Activated CD4-positive, alpha-beta T cell treated with anti-CD3 and anti-CD28 coated beads for 36 hours (primary cell): ENCODE measurements at regions of chr19 and their contacts with region 1.

Region 1: DNA sequence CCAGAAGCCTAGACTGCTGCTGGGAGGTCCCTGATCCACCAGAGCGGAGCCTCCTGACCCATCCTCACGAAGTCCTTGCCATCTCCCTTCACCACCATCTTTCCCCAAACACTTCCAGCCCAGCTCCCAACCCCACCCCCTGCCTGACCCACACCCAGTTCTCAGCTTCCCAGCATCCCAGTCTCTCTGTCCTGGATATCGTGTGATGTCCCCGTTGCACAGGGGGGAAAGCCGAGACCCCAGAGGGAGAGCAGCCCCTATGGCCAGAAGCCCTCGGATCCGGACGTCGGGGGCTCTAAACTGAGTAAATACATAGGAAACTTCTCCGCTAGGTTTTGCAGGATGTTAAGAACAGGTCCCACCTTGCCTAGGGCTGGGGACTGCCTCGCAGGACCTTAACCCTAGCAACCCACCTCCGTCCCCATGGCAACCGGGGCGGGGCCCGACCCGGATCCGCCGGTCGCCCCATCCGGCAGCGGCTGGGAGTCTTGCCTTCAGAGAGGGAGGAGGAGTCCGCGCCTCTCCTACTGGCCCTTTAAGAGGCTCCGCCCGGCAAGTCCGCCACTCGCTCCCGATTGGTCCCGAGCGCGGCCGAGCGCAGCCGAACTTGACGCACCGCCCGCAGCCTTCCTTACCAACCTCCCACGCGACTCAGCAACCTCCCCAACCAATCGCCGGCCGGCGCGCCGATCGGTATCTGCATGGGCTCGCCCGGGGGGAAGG is 451 bp upstream of the HMG20B start:
- DNase-seq: peak; percentile 100
- ATAC-seq: peak; percentile 96
- H3K4me3 Mint-ChIP-seq: peak overlapping the region; percentile 73
- H3K27ac Mint-ChIP-seq: no peak overlapping the region
- H3K4me1 Mint-ChIP-seq: peaks cover 11% of the 10 kb centered on the region
- H3K27me3 Mint-ChIP-seq: no peaks in the 10 kb centered on the region

Region 2: DNA sequence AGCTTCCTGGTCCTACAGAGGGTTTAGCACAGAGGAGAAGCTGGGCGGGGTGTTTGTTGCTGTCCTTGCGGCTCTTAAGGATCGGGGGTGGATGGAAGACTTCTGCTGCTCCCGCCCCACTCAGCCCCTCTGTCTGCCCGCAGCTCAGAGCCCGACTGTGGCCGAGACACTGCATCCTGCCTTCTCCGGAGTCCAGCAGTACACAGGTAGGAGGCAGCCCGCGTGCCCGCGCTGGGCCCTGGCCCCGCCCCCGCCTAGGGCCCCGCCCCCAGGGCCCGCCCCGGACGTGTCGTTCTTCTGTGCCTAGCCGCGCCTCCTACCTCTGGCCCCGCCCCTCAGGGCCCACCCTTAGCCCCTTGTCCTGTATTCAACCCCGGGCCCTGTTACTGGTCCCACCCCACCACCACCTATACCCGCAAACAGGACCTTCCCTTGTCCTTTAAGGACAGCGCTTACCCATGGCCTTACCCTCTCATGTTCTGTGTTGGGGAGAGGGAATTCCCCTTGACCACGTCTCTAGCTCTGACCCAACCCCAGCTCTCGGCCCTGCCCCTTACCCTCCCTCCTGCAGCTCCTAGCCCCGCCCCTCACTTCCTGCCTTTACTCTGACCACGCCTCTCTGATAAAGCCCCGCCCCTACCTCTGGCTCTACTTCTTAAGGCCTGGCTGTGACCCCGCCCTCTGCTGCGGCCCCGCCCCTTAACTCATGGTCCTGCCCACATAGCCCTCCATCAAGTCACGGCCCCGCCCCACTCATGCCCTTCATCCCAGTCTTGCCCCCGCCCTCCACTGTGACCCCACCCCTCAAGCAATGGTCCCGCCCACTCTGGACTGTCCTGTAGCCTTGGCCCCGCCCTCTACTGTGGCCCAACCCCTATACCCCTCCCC is 287.3 kb before region 1 on chr19:
- CTCF ChIA-PET with region 1: no interaction called
- POLR2A ChIA-PET with region 1: no interaction called
- intact Hi-C with region 1: loop called in 1 of 2 experiments (anchors 1 kb)
- DNase-seq: peak; percentile 94
- ATAC-seq: peak; percentile 91
- H3K4me3 Mint-ChIP-seq: peak overlapping the region; percentile 51
- H3K27ac Mint-ChIP-seq: no peak overlapping the region
- H3K4me1 Mint-ChIP-seq: peaks cover 12% of the 10 kb centered on the region
- H3K27me3 Mint-ChIP-seq: peaks cover 19% of the 10 kb centered on the region

Region 3: DNA sequence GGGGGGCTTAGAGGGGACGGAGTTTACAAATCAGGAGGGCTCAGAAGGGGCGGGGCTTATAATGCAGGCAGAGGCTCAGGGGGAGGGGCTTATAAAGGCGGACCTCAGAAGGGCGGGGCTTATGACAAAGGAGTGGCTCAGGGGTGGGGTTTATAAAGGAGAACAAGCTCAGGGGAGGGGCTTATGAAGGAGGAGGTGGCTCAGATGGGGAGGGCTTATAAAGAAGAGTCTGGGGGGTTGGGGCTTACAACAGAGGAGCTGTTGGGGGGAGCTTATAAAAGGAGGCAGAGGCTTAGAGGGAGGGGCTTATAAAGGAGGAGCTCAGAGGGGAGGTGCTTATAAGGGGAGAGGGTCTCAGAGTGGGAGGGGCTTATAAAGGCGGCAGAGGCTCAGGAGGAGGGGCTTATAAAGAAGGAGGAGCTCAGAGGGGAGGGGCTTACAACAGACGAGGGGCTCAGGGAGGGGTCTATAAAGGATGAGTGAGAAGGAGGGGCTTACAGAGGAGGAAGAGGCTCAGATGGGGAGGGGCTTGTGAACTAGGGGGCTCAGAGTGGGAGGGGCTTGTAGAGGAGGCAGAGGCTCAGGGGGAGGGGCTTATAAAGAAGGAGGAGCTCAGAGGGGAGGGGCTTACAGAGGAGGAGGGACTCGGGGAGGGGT is 93.0 kb before region 1 on chr19:
- CTCF ChIA-PET with region 1: no interaction called
- POLR2A ChIA-PET with region 1: no interaction called
- intact Hi-C with region 1: no loop called
- DNase-seq: peak; percentile 68
- ATAC-seq: peak; percentile 77
- H3K4me3 Mint-ChIP-seq: no peak overlapping the region
- H3K27ac Mint-ChIP-seq: no peak overlapping the region
- H3K4me1 Mint-ChIP-seq: peaks cover 9% of the 10 kb centered on the region
- H3K27me3 Mint-ChIP-seq: no peaks in the 10 kb centered on the region

Region 4: GRCh38 chr19:3544742-3545668 is 27.3 kb before region 1 on chr19:
- CTCF ChIA-PET with region 1: interaction called, 3 read pairs
- POLR2A ChIA-PET with region 1: no interaction called
- intact Hi-C with region 1: loop called in 1 of 2 experiments (anchors 1 kb)
- DNase-seq: peak; percentile 90
- ATAC-seq: peak; percentile 84
- H3K4me3 Mint-ChIP-seq: no peak overlapping the region
- H3K27ac Mint-ChIP-seq: peak overlapping the region; percentile 58
- H3K4me1 Mint-ChIP-seq: peaks cover 6% of the 10 kb centered on the region
- H3K27me3 Mint-ChIP-seq: no peaks in the 10 kb centered on the region

Region 5: DNA sequence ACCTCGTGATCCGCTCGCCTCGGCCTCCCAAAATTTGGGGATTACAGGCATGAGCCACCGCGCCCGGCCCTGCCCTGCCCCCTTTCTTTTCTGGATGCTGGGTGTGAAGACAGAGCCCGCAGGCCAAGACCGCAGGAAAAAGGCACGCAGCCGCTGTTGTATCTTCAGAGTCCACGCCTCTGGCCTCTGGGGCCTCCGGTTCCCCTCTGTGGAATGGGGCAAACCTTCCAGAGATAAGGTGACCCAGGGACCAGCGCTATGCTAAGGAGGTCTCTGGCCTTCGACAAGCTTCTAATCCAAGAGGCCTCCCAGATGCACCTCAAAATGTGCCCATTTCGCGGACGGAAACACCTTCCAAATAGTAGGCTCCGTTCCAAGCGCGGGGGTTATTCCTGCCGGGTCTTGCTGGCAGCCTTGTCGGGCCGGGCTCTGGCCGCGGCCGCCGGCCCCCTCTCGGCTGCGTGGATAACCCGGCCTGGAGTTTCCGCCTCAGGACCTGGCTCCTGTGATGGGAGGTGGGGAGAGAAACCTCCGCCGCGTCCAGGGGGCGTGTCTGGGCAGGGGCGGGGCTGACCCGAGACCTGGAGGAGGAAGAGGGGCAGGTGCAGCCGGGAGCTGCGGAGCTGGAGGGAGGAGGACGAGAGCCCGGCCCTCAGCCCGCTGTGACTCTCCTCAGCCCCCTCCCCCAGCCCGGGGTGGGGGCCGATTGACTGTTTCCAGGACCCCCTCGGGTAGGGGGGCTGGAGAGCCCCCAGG is 149.0 kb after region 1 on chr19:
- CTCF ChIA-PET with region 1: no interaction called
- POLR2A ChIA-PET with region 1: no interaction called
- intact Hi-C with region 1: loop called in 1 of 2 experiments (anchors 1 kb)
- DNase-seq: peak; percentile 92
- ATAC-seq: peak; percentile 94
- H3K4me3 Mint-ChIP-seq: peak overlapping the region; percentile 13
- H3K27ac Mint-ChIP-seq: no peak overlapping the region
- H3K4me1 Mint-ChIP-seq: peaks cover 10% of the 10 kb centered on the region
- H3K27me3 Mint-ChIP-seq: peaks cover 4% of the 10 kb centered on the region

Region 6: GRCh38 chr19:3984908-3985642 is 412.8 kb after region 1 on chr19 and contains the start of gene EEF2:
- CTCF ChIA-PET with region 1: no interaction called
- POLR2A ChIA-PET with region 1: no interaction called
- intact Hi-C with region 1: loop called in 1 of 2 experiments (anchors 1 kb)
- DNase-seq: peak; percentile 94
- ATAC-seq: peak; percentile 45
- H3K4me3 Mint-ChIP-seq: peak within 1 kb of the TSS; percentile 87
- H3K27ac Mint-ChIP-seq: peak within 1 kb of the TSS; percentile 94
- H3K4me1 Mint-ChIP-seq: peaks cover 52% of the 10 kb centered on the region
- H3K27me3 Mint-ChIP-seq: no peaks in the 10 kb centered on the region
- total RNA-seq, gene EEF2: 3,116 to 3,255 TPM